ENCODE measurements at regions of chr15 and their contacts with region 1.

Region 1: DNA sequence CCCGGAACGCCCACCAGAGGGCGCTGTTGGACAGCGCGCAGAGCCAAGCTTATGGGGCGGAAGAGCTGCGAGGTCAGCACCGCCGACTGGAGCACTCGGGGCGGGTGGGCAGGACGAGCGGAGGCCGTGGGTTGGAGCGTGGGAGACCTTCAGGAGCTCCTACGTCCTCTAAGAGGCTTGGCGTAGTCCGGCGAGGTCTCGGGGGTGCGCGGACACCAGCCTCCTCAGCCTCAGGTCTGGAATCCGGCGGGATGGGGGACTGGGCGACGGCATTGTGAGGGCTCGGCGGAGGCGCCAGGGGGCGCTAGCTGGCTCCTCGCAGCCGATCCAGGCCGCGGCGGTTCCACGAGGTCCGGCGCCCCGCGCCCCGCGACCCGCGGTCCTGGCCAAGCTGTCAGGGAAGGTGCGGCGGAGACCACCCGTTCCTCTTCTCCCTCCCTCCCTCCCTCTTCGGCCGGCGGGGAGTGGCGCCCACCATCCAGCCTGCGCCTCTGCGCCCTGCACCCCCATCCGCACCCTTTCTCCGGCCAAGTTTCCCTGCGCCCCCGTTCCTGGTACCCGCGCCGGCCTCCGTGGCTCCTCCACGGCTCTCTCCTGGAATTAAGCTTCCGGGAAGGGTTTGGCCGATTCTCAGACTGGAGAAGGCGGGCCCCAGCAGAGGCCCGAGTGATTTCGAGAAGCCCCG is 24.3 kb upstream of the POLG start:
- DNase-seq: peak; percentile 82
- H3K4me3 Mint-ChIP-seq: peak overlapping the region; percentile 74
- H3K27ac Mint-ChIP-seq: no peak overlapping the region
- H3K4me1 Mint-ChIP-seq: peaks cover 10% of the 10 kb centered on the region
- H3K27me3 Mint-ChIP-seq: peaks cover 72% of the 10 kb centered on the region

Region 2: DNA sequence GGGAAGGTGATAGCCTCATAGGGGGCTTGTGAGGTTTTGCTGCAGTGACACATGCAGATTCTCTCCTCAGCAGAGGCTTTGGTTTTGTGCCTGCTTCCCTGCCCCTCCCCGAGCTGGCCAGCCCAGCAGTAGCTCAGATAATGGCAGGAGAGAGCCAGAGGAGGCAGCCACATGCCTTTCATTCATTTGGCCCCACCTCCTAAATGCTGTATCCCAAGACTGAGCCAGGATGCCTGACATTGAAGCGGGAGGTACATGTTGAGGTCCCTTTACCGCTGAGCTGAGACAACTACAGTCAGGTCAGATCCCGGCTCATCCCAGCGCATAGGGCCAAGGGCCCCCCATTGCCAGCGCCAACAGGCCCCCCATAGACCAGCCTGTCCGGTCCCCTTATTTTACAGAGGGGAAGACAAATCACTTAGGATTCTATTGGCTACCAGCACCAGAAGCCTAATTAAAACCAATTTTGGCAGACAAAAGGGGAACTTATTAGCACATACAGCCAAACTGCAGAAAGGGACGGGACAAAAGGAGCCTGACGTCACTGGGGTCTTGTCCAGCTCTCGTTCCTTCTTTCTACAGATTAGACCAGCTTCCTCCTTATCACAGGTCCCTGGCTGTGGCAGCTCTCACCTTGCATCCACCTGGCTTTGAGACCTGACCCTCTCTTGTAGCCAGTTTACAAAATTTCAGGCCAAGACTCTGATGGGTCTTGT is 12.2 kb before region 1 on chr15:
- CTCF ChIA-PET with region 1: interaction called, 30 read pairs
- POLR2A ChIA-PET with region 1: no interaction called
- DNase-seq: no peak
- H3K4me3 Mint-ChIP-seq: no peak overlapping the region
- H3K27ac Mint-ChIP-seq: no peak overlapping the region
- H3K4me1 Mint-ChIP-seq: peaks cover 4% of the 10 kb centered on the region
- H3K27me3 Mint-ChIP-seq: peaks cover 6% of the 10 kb centered on the region

Region 3: GRCh38 chr15:89378296-89379151 is 19.6 kb after region 1 on chr15:
- CTCF ChIA-PET with region 1: interaction called, 28 read pairs
- POLR2A ChIA-PET with region 1: no interaction called
- DNase-seq: no peak
- H3K4me3 Mint-ChIP-seq: peak overlapping the region; percentile 19
- H3K27ac Mint-ChIP-seq: peak overlapping the region; percentile 64
- H3K4me1 Mint-ChIP-seq: no peaks in the 10 kb centered on the region
- H3K27me3 Mint-ChIP-seq: peaks cover 93% of the 10 kb centered on the region

Region 4: DNA sequence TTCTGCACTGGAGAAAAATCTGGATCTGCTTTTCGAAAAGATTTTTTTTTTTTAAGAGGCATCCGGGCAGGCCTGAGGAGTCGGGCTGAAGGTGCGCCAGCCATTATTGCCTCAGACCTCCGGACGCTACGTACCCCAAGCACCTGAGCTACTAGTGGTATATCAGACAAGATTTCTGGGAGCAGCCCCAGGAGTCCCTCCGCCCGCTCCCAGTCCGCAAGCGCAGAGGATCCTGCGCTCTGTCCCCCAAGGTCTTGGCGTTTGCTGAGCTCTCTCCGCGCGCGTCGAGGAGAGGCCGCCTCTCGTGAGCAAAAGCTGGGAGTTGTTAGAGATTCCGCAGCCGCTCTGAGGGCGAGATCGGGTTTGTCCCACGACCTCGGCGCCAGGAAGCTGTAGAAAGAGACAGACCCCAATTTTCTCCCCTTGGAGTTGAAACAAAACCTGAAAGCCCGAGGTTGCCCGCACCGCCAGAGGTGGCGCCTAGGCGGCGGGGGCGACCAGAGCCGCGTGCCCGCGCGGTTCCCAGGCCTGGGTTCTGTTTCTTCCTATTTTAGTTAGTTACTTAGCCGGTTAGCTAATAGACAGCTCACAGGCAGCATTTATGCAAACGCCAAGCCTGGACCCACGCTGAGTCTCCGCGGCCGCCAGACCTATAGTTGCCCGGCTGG is 48.2 kb after region 1 on chr15:
- CTCF ChIA-PET with region 1: interaction called, 47 read pairs
- POLR2A ChIA-PET with region 1: no interaction called
- DNase-seq: no peak
- H3K4me3 Mint-ChIP-seq: no peak overlapping the region
- H3K27ac Mint-ChIP-seq: peak overlapping the region; percentile 19
- H3K4me1 Mint-ChIP-seq: peaks cover 38% of the 10 kb centered on the region
- H3K27me3 Mint-ChIP-seq: peaks cover 95% of the 10 kb centered on the region

Region 5: GRCh38 chr15:89430530-89431341 is 71.8 kb after region 1 on chr15:
- CTCF ChIA-PET with region 1: interaction called, 71 read pairs
- POLR2A ChIA-PET with region 1: no interaction called
- DNase-seq: peak; percentile 85
- H3K4me3 Mint-ChIP-seq: peak overlapping the region; percentile 64
- H3K27ac Mint-ChIP-seq: no peak overlapping the region
- H3K4me1 Mint-ChIP-seq: peaks cover 6% of the 10 kb centered on the region
- H3K27me3 Mint-ChIP-seq: peaks cover 27% of the 10 kb centered on the region

Region 6: DNA sequence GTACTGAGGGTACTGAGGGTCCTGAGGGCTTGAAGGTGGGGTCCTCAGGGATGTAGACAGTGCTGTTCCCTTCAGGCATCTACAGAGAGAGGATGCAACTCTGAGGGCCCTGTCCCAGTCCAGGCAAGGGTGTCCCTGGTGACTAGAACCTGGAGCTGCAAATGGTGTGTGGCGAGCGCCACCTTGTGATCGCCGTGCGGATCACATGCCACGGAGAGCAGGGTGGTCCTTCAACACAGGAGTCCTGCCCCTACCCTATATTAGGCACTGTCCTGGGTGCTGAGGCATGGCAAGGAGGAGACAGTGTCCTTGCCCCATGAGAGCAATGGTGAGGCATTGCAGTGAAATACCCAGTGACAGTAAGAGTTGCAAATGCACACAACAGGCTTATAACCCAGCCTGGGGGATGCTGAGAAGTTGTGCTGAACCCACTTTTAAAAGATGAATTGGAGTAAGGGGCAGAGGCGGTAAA is 113.9 kb after region 1 on chr15:
- CTCF ChIA-PET with region 1: interaction called, 16 read pairs
- POLR2A ChIA-PET with region 1: no interaction called
- DNase-seq: peak; percentile 46
- H3K4me3 Mint-ChIP-seq: no peak overlapping the region
- H3K27ac Mint-ChIP-seq: no peak overlapping the region
- H3K4me1 Mint-ChIP-seq: no peaks in the 10 kb centered on the region
- H3K27me3 Mint-ChIP-seq: peaks cover 23% of the 10 kb centered on the region